Activated B cell treated with CpG ODN at 0.5 μM for 24 hours (primary cell): ENCODE measurements at regions of chr12 and their contacts with region 1.

Region 1: DNA sequence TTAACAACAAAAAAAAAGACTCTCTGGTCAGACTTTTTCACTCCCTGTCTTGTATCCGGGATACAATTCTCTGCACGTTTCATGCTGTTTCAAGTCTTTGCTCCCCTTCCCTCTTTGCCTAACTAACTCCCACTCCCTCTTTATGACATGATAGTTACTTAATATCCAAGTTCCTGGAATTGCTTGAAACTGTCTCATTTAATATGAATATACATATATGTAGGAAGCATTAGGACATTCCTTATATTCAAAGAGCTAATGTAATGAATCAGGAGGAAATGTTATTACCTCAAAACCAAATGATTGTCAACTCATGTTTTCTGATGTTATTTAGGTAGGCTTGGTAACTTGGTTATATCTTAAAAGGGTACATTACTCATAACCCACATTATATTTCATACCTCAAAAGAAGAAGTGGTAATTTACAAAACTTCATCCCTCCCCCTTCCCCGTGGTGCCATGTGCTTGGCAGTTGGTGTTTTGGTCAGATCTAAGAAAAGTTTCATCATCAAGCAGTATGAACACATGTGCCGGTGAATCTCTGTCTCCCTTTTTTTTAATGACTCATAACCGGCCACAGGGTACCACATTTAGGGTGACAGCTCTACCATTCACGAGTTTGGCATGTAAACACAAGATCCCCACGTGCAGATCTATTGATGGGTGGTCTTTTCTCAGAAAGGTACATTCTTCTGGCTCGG is 56.5 kb downstream of the HCAR2 start:
- DNase-seq: peak; percentile 21
- ATAC-seq: peak; percentile 84
- H3K4me3 Mint-ChIP-seq: peak overlapping the region; percentile 80
- H3K27ac Mint-ChIP-seq: peak overlapping the region; percentile 91
- H3K4me1 Mint-ChIP-seq: peaks cover 19% of the 10 kb centered on the region
- H3K27me3 Mint-ChIP-seq: no peaks in the 10 kb centered on the region
- CTCF ChIP-seq: no peak

Region 2: DNA sequence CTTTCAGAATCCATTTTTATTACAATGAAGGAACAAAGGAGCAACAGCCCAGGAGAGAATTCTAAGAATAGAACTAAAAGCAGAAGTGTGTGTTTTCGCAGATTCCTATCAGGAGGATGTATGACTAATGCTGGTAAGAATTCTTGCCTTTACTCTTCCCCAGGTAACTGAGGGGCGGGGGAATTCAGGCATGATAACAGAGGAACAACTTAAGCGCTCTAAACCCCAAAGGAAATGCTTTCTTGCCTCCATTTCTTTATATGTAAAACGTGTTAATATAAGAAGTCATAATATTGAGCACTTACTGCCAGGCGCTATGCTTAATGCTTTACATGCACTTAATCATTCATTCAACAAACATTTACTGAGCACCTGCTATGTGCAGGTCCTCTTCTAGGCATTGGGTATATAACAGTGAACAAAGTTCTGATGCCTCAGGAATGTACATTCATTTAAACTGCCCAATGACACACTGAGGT is 79.5 kb after region 1 on chr12:
- CTCF ChIA-PET with region 1: no interaction called
- POLR2A ChIA-PET with region 1: no interaction called
- intact Hi-C with region 1: loop called (anchors 2 kb)
- DNase-seq: no peak
- ATAC-seq: peak; percentile 45
- H3K4me3 Mint-ChIP-seq: peak overlapping the region; percentile 36
- H3K27ac Mint-ChIP-seq: peak overlapping the region; percentile 79
- H3K4me1 Mint-ChIP-seq: peaks cover 33% of the 10 kb centered on the region
- H3K27me3 Mint-ChIP-seq: no peaks in the 10 kb centered on the region
- CTCF ChIP-seq: no peak